Panc1 (cell line): ENCODE measurements at regions of chr10 and their contacts with region 1.

Region 1: GRCh38 chr10:77513781-77514331 is 123.8 kb downstream of the KCNMA1 start:
- DNase-seq: peak; percentile 85
- ATAC-seq: peak; percentile 91
- H3K4me3 ChIP-seq: peak overlapping the region in 1 of 2 experiments; percentile 26; a peak in 2 of 4 replicates
- H3K27ac ChIP-seq: peak overlapping the region; percentile 84
- H3K4me1 ChIP-seq: peaks cover 88% of the 10 kb centered on the region
- H3K27me3 ChIP-seq: no peaks in the 10 kb centered on the region
- CTCF ChIP-seq: no peak

Region 2: DNA sequence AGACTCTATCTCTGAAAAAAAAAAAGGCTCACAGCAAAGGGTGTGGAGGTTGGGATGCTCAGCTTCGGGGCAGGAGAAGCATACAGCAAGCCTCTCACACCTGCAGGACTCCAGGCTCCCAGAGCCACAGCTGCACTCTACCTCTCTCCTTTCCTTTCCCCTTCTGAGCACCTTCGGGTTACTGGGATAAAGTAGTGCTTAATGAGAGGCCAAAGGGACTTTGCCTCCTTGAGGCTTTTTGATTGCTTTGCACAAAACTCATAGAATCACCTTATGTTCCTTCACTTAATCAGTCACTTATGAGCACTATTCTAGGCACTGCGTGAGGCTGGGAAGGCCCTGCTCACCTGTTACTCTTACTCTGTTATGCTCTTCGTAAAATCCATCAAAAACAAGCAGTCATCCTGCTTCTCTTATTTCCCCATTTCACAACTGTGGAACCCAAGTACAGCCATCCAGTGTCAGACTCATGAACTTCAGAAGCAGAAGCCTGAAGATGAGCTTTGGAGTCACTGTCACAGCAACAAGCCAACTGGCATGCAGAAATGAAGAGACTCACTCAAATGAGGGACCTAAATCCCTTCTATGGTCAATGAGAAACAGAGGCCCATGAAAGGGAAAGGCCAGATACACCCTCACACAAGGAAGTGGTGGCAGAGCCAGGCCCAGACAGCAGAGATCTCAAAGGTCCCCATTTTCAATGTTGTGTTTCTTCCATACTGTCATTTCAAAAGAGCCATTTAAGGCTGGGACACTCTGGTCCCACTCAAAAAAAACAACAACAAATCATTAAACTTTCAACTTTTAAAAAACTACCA is 81.7 kb before region 1 on chr10:
- CTCF ChIA-PET with region 1: no interaction called
- POLR2A ChIA-PET with region 1: interaction called, 15 read pairs
- in situ Hi-C with region 1: no loop called
- intact Hi-C with region 1: no loop called
- DNase-seq: no peak
- ATAC-seq: no peak
- H3K4me3 ChIP-seq: no peak overlapping the region
- H3K27ac ChIP-seq: no peak overlapping the region
- H3K4me1 ChIP-seq: peaks cover 8% of the 10 kb centered on the region
- H3K27me3 ChIP-seq: no peaks in the 10 kb centered on the region
- CTCF ChIP-seq: no peak; the same call in 1 of the 2 replicates